PC-9 (cell line): ENCODE measurements at regions of chr12 and their contacts with region 1.

Region 1: DNA sequence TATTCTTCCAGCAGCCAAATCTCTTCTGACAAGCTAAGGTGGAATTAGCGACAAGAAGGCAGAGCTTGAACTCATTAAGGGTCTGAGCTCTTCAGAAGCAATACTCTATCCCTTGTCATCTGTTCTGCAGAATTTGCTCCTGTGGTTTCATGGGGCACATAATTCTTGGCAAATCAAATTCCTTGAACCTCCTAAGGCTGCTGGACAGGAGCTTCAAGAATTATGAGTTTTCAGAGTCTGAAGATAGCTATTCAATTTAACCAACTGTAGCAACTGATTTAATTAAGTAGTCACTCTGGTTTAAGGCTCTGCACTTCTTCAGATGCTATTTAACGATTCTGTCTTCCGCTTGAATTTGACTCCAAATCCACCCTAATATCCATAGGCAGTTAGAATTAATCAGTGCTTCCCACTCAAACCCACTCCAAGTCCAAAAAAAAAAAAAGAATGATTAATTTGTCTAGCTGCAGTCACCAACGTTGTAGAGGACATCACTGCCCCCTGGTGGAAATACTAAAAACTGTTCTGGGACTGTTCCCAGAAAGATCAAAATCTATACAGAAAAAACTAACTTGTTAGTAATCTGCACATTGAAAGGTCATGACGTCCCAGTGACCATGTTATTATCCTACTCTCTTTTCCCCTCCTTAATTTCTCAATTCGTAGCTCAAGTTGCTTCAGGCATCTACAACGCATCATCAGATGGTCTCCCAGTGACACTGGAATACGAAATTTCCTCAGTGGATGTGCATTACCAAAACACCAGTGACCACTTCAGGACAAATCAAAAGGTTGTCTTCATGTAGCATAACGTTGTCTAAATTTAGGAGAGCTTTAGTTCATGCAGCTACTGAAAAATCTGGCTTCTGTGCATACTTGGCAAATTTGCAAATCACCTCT is 169.8 kb downstream of the KIF21A start:
- DNase-seq: peak in 1 of 2 experiments; percentile 19
- H3K4me3 ChIP-seq: no peak overlapping the region
- H3K27ac ChIP-seq: no peak overlapping the region
- H3K4me1 ChIP-seq: no peaks in the 10 kb centered on the region
- H3K27me3 ChIP-seq: no peaks in the 10 kb centered on the region
- CTCF ChIP-seq: peak; percentile 78

Region 2: DNA sequence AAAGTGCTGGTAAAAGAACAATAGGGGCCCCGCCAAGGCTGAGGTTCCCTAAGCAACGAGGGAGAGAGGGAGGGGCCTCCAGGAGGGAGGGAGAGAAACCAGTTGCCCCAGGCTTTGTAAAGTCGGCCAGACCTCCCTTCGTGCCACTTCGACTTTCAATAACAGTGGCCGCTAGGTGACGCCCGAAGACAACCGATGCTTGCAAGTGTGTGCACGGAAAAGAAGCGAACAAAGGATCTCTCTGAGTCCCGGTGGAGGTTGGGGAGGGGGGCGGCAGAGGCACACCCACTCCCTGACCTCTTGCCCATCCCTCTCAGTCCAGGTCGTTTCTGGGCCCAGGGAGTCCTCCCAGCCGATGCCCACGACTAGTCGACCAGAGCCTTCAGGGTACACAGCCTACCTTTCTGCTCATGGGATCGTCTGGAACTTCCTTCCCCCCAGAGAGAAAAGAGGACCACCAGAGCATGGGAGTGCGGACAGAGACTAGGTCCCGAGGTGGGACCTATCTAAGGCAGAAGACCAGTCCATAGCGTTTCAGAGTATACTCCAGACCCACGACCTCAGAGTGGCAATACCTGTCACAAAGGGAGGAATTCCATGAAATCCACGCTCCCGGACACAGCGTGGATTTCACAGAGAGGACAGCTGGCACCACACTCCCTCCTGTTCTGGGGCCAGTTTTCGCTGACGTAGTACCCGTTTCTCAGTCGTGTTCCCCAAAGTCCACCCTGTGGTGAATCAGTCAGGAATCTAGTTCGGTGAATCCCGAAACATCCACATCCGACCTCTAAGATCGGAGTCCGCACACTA is 1219.3 kb before region 1 on chr12:
- CTCF ChIA-PET with region 1: no interaction called
- POLR2A ChIA-PET with region 1: no interaction called
- intact Hi-C with region 1: loop called (anchors 5 kb)
- DNase-seq: peak; percentile 70 to 82
- H3K4me3 ChIP-seq: peak overlapping the region; percentile 41; the same call in 1 of the 2 replicates
- H3K27ac ChIP-seq: no peak overlapping the region
- H3K4me1 ChIP-seq: peaks cover 17% of the 10 kb centered on the region
- H3K27me3 ChIP-seq: no peaks in the 10 kb centered on the region
- CTCF ChIP-seq: peak; percentile 88

Region 3: GRCh38 chr12:38138225-38139221 is 1134.6 kb before region 1 on chr12:
- CTCF ChIA-PET with region 1: no interaction called
- POLR2A ChIA-PET with region 1: no interaction called
- intact Hi-C with region 1: loop called (anchors 10 kb)
- DNase-seq: peak; percentile 54 to 76
- H3K4me3 ChIP-seq: peak overlapping the region; percentile 57
- H3K27ac ChIP-seq: no peak overlapping the region
- H3K4me1 ChIP-seq: peaks cover 14% of the 10 kb centered on the region
- H3K27me3 ChIP-seq: no peaks in the 10 kb centered on the region
- CTCF ChIP-seq: peak; percentile 94

Region 4: GRCh38 chr12:38332814-38333213 is 940.3 kb before region 1 on chr12:
- CTCF ChIA-PET with region 1: no interaction called
- POLR2A ChIA-PET with region 1: no interaction called
- intact Hi-C with region 1: loop called (anchors 2 kb)
- DNase-seq: no peak
- H3K4me3 ChIP-seq: no peak overlapping the region
- H3K27ac ChIP-seq: no peak overlapping the region
- H3K4me1 ChIP-seq: no peaks in the 10 kb centered on the region
- H3K27me3 ChIP-seq: no peaks in the 10 kb centered on the region
- CTCF ChIP-seq: no peak

Region 5: GRCh38 chr12:38921025-38921677 is 352.0 kb before region 1 on chr12:
- CTCF ChIA-PET with region 1: interaction called, 6 read pairs
- POLR2A ChIA-PET with region 1: no interaction called
- intact Hi-C with region 1: loop called (anchors 1 kb)
- DNase-seq: peak; percentile 40 to 58
- H3K4me3 ChIP-seq: no peak overlapping the region
- H3K27ac ChIP-seq: no peak overlapping the region
- H3K4me1 ChIP-seq: no peaks in the 10 kb centered on the region
- H3K27me3 ChIP-seq: no peaks in the 10 kb centered on the region
- CTCF ChIP-seq: peak; percentile 75

Region 6: DNA sequence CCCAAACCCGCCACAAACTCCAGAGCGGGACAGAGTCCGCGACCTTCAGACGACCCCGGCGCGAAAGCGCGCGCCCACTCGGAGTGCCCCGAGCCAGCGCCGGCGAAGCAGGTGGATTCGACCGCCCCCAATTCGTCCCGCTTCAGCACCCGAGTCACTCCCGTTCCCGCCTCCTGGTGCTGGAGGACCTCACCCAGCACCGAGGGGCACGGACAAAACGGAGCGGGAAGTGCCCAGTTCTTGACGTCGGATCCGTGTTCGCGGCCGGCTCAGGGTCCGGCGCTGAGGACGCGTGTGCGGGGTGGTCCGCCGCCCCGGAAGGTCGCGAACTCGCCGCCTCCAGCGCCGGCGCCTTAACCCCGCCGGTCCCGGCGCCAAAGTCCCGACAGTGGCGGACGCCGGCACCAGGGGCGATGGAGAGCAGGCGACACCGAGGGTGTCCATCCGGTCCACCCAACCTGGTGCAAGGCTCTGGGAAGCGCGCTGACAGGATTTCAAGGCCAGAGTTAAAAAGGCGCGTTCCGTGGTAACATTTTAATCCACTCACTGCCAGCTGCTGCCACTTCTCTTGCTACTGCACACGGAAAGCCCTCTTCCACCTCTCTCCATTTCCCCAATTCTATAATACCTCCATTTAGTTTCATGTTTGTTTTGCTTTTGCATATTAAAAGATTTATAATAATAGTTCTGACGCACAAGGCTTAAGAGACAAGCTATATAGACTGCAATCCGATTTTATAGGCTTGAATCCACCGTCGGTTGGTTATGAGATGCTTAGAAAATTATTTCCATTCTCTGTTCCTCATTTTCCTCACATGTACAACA is 127.7 kb before region 1 on chr12:
- CTCF ChIA-PET with region 1: no interaction called
- POLR2A ChIA-PET with region 1: no interaction called
- intact Hi-C with region 1: loop called (anchors 5 kb)
- DNase-seq: peak in 1 of 2 experiments; percentile 76
- H3K4me3 ChIP-seq: peak overlapping the region; percentile 70
- H3K27ac ChIP-seq: no peak overlapping the region
- H3K4me1 ChIP-seq: peaks cover 4% of the 10 kb centered on the region; the same call in 1 of the 2 replicates
- H3K27me3 ChIP-seq: no peaks in the 10 kb centered on the region
- CTCF ChIP-seq: peak; percentile 89